Cardiac septum (tissue), 1 donor: ENCODE measurements at regions of chr14 and their contacts with region 1.

Region 1: GRCh38 chr14:88868558-88869159 is 44.2 kb downstream of the TTC8 start:
- DNase-seq: no peak

Region 2: DNA sequence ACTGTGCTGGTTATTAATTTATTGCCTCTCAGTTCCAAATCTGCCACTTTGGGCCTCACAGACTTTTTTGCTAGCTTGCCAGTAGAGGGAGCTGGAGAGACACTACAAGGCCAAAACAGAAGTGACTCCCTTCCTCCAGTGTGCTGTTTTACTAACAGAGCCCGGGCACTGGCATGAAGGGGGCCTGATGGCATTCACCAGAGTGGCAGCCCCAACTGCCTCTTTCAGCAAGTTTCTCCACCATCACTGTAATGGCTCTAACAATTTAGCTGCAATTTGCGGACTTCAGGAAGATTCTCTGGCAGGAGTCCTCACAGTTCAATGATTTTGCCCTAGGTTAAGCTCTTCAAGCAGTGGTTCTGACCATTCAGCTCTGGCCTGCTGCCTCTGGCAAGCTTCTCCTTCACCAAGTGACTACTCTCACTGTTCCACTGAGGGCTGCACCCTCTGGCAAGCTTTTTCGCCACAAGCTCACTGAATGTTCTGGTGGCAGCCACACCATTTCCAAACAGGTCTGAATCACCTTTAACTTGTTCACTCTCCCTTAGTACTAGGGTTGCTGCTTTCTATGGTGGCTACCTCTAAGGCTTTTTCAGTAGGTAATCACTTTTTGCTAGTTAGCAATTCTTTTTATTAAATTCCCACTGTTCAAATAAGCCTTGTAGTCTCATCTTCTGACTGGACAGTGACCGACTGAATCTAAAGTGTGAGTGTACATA is 200.9 kb before region 1 on chr14:
- intact Hi-C with region 1: loop called (anchors 10 kb)
- DNase-seq: no peak